Activated CD4-positive, alpha-beta T cell treated with anti-CD3 and anti-CD28 coated beads, Interleukin-2, amount 10 ng/mL, durations not matched to agents 24 days and 14 days (primary cell): ENCODE measurements at regions of chr7 and their contacts with region 1.

Region 1: GRCh38 chr7:30594549-30595435 is at the start of gene GARS1:
- DNase-seq: peak; percentile 97
- H3K4me3 Mint-ChIP-seq: peak within 1 kb of the TSS; percentile 94
- H3K27ac Mint-ChIP-seq: peak within 1 kb of the TSS; percentile 98
- H3K4me1 Mint-ChIP-seq: peaks cover 49% of the 10 kb centered on the region
- H3K27me3 Mint-ChIP-seq: no peaks in the 10 kb centered on the region
- total RNA-seq, gene GARS1: 261 and 262 TPM in 2 replicates

Region 2: GRCh38 chr7:30284298-30285066 is 310.3 kb before region 1 on chr7 and contains the start of gene ZNRF2:
- intact Hi-C with region 1: loop called (anchors 1 kb)
- DNase-seq: peak; percentile 100
- H3K4me3 Mint-ChIP-seq: peak within 1 kb of the TSS; percentile 88
- H3K27ac Mint-ChIP-seq: peak within 1 kb of the TSS; percentile 92
- H3K4me1 Mint-ChIP-seq: peaks cover 43% of the 10 kb centered on the region
- H3K27me3 Mint-ChIP-seq: no peaks in the 10 kb centered on the region
- total RNA-seq, gene ZNRF2: 8.8 and 9.2 TPM in 2 replicates

Region 3: DNA sequence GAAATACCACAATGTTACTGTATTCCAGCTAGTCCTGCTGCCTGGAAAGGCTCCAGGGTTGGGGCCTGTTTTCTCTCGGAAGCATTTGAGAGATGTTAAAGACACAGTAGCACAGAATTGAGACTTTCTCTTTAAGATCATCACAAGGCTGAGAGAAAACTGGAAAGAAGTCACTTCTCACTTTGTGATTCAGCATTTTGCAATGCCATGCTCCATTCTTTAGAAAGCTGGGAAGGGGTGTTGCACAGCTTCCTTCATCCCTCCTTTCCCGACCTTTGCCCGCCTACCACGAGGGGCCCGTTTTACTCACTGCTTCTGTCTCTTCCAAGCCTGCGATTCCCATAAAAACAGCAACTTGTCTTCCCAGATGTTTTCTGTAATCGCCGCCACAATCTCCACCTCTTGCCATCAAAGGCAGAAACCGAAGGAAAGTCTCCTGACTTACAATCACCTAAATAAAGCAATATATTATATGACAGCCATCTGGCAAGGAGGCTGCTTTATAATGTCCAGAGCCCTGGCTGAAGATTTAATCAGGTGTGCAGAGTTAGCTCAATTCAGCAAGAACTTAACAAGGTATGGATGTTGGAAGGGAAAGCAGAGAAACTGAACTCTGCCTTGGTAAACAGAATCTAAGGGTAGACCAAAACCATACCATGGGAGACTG is 135.1 kb before region 1 on chr7:
- intact Hi-C with region 1: no loop called
- DNase-seq: no peak
- H3K4me3 Mint-ChIP-seq: no peak overlapping the region
- H3K27ac Mint-ChIP-seq: no peak overlapping the region
- H3K4me1 Mint-ChIP-seq: peaks cover under 1% of the 10 kb centered on the region
- H3K27me3 Mint-ChIP-seq: no peaks in the 10 kb centered on the region

Region 4: GRCh38 chr7:30478349-30479201 is 116.2 kb before region 1 on chr7 and contains the start of gene NOD1:
- intact Hi-C with region 1: loop called (anchors 1 kb)
- DNase-seq: peak; percentile 93
- H3K4me3 Mint-ChIP-seq: peak within 1 kb of the TSS; percentile 92
- H3K27ac Mint-ChIP-seq: peak within 1 kb of the TSS; percentile 93
- H3K4me1 Mint-ChIP-seq: peaks cover 45% of the 10 kb centered on the region
- H3K27me3 Mint-ChIP-seq: no peaks in the 10 kb centered on the region
- total RNA-seq, gene NOD1: 11.6 and 12.9 TPM in 2 replicates

Region 5: GRCh38 chr7:30612658-30613265 is 18.0 kb after region 1 on chr7:
- intact Hi-C with region 1: loop called (anchors 2 kb)
- DNase-seq: no peak
- H3K4me3 Mint-ChIP-seq: peak overlapping the region; percentile 44
- H3K27ac Mint-ChIP-seq: peak overlapping the region; percentile 82
- H3K4me1 Mint-ChIP-seq: peaks cover 42% of the 10 kb centered on the region
- H3K27me3 Mint-ChIP-seq: no peaks in the 10 kb centered on the region

Region 6: GRCh38 chr7:32495298-32496176 is 1900.7 kb after region 1 on chr7 and contains the start of gene AVL9:
- intact Hi-C with region 1: loop called (anchors 10 kb)
- DNase-seq: peak; percentile 100
- H3K4me3 Mint-ChIP-seq: peak within 1 kb of the TSS; percentile 86
- H3K27ac Mint-ChIP-seq: peak within 1 kb of the TSS; percentile 98
- H3K4me1 Mint-ChIP-seq: peaks cover 27% of the 10 kb centered on the region
- H3K27me3 Mint-ChIP-seq: no peaks in the 10 kb centered on the region
- total RNA-seq, gene AVL9: 44.6 and 49.1 TPM in 2 replicates